Endothelial cell of umbilical vein (primary cell): ENCODE measurements at regions of chr16 and their contacts with region 1.

Region 1: DNA sequence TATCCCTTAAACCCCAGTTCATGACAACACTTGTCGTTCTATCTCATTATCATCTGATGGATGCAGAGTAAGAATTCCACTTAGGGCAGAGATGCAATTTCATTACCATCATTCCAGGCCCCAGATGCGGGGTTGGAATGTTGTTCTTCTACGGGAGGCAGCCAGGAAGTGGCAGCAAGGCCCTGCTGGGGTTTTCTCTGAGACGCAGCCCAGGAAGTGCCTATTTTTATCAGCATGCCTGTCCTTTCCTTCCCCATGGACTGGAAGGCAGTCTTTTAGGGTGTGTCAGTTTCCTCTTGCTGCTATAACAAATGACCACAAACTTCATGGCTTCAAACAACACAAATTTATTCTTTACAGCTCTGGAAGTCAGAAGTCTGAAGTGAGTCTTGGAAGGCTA is 246.6 kb upstream of the DYNLRB2 start:
- DNase-seq: no peak
- H3K4me3 ChIP-seq: no peak overlapping the region
- H3K27ac ChIP-seq: no peak overlapping the region
- H3K4me1 ChIP-seq: peaks cover 12% of the 10 kb centered on the region
- H3K27me3 ChIP-seq: no peaks in the 10 kb centered on the region
- CTCF ChIP-seq: no peak
- POLR2A ChIP-seq: no peak

Region 2: DNA sequence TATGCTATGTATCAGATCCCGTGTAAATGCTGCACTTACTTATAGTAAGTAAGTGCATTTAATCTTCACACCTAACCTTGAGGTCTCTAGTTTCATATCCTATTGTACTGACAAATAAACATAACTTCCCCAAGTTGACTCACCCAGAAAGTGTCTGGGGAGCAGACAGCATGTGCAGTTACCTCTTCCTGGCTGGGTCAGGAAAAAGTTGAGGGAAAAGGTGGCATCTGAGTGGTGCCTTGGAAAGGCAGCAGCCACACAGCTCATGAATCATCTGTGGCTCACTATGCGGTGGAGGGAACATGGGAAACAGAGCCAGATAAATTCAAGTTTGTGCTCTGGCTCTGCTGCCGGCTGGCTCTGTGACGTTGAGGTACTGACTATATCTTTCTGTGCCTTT is 135.4 kb before region 1 on chr16:
- CTCF ChIA-PET with region 1: no interaction called
- POLR2A ChIA-PET with region 1: no interaction called
- dilution Hi-C with region 1: no loop called
- intact Hi-C with region 1: loop called (anchors 5 kb)
- DNase-seq: peak; percentile 82
- H3K4me3 ChIP-seq: no peak overlapping the region
- H3K27ac ChIP-seq: no peak overlapping the region
- H3K4me1 ChIP-seq: peaks cover 16% of the 10 kb centered on the region
- H3K27me3 ChIP-seq: no peaks in the 10 kb centered on the region
- CTCF ChIP-seq: no peak
- POLR2A ChIP-seq: no peak

Region 3: DNA sequence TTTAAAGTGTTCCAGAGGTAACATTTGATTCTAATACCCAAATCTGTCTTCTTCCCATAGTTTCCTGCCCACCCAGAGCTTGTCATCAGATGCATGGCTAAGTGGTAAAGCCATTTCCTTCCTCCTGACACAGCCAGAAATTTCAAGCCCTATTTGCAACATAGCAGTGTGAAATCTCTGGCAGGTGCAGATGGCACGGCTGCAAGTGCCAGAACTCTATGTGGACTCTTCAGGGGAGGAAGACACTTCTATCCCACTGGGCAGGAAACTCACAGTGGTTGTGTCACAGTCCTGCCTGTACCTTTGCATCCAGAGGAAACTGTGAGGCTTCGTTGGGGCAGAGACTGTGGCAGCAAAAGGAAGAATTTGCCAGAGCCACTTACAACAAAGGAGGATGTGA is 259.9 kb after region 1 on chr16:
- CTCF ChIA-PET with region 1: no interaction called
- POLR2A ChIA-PET with region 1: no interaction called
- dilution Hi-C with region 1: no loop called
- intact Hi-C with region 1: no loop called
- DNase-seq: no peak
- H3K4me3 ChIP-seq: no peak overlapping the region
- H3K27ac ChIP-seq: no peak overlapping the region
- H3K4me1 ChIP-seq: no peaks in the 10 kb centered on the region
- H3K27me3 ChIP-seq: peaks cover 5 to 8% of the 10 kb centered on the region in 2 experiments
- CTCF ChIP-seq: no peak
- POLR2A ChIP-seq: no peak

Region 4: DNA sequence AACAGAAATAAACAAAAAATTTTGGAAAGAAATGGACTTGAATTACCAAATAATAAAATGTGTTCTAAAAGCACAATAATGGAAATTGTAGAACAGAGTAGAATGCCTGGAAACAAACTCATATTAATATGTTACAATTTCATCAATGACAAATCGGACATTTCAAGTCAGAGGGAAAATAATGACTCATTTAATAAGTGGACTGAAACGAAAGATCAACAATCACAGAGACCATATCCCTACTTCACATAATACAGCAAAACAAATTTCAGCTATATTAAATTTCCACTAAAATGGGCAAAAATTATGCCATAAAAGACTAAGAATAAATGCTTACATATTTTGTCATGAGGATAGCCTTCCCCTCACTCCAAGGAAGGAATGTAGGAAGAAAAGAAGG is 484.5 kb after region 1 on chr16:
- CTCF ChIA-PET with region 1: no interaction called
- POLR2A ChIA-PET with region 1: no interaction called
- dilution Hi-C with region 1: no loop called
- intact Hi-C with region 1: no loop called
- DNase-seq: peak; percentile 63
- H3K4me3 ChIP-seq: peak overlapping the region in 2 of 3 experiments; percentile 37 to 43
- H3K27ac ChIP-seq: peak overlapping the region; percentile 69
- H3K4me1 ChIP-seq: peaks cover 21% of the 10 kb centered on the region
- H3K27me3 ChIP-seq: no peaks in the 10 kb centered on the region
- CTCF ChIP-seq: no peak
- POLR2A ChIP-seq: no peak